PC-9 (cell line): ENCODE measurements at regions of chr12 and their contacts with region 1.

Region 1: GRCh38 chr12:108833355-108833733 is 24.0 kb downstream of the SSH1 start:
- DNase-seq: peak; percentile 88 to 92
- H3K4me3 ChIP-seq: peak overlapping the region; percentile 31; the same call in 1 of the 2 replicates
- H3K27ac ChIP-seq: peak overlapping the region; percentile 93
- H3K4me1 ChIP-seq: peaks cover 45% of the 10 kb centered on the region
- H3K27me3 ChIP-seq: no peaks in the 10 kb centered on the region
- CTCF ChIP-seq: no peak

Region 2: DNA sequence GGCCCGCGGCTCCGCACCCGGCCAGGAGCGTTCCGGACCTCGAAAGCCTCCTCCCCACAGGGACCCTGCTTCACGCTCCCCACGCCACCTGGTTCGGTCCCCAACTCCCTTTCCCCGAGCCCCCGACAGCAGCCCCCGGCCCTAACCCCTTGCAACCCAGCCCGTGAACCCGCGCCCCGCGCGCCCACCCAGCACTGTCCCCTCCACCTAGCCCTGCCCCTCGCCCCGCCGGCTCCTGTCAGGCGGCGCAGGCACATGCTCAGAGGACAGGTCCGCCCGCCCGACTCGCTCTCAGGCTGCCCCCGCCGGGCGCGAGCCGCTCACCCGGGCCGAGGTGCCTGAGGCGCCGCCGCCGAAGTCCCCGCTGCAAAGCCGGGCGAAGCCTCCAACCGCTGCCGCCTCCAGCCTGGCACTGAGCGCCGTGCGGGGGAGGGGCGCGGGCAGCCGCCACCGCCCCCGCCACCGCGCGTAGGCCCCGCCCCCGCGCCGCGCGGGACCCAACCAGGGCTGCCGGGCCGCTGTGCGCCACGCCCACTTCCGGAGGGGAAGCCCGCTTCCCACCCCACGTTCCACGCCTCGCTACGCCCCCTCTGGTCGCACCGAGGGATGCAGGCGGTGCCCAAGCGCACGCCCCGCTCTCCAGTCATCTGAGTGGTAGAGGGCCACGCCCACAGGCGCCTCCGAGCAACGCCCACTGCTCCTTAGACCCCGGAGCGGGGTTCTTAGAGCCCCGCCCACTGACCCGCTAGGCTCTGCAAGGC is 102.1 kb before region 1 on chr12 and contains the start of gene CORO1C:
- CTCF ChIA-PET with region 1: no interaction called
- POLR2A ChIA-PET with region 1: interaction called, 8 read pairs
- intact Hi-C with region 1: loop called (anchors 5 kb)
- DNase-seq: peak; percentile 85 to 98
- H3K4me3 ChIP-seq: peak within 1 kb of the TSS; percentile 85
- H3K27ac ChIP-seq: peak within 1 kb of the TSS; percentile 84
- H3K4me1 ChIP-seq: peaks cover 46% of the 10 kb centered on the region
- H3K27me3 ChIP-seq: no peaks in the 10 kb centered on the region
- CTCF ChIP-seq: peak; percentile 80
- total RNA-seq, gene CORO1C: 122 and 139 TPM in 2 replicates

Region 3: GRCh38 chr12:108803428-108804105 is 29.8 kb before region 1 on chr12:
- CTCF ChIA-PET with region 1: no interaction called
- POLR2A ChIA-PET with region 1: interaction called, 10 read pairs
- intact Hi-C with region 1: no loop called
- DNase-seq: peak; percentile 58 to 65
- H3K4me3 ChIP-seq: no peak overlapping the region
- H3K27ac ChIP-seq: no peak overlapping the region
- H3K4me1 ChIP-seq: no peaks in the 10 kb centered on the region
- H3K27me3 ChIP-seq: no peaks in the 10 kb centered on the region
- CTCF ChIP-seq: peak; percentile 94

Region 4: DNA sequence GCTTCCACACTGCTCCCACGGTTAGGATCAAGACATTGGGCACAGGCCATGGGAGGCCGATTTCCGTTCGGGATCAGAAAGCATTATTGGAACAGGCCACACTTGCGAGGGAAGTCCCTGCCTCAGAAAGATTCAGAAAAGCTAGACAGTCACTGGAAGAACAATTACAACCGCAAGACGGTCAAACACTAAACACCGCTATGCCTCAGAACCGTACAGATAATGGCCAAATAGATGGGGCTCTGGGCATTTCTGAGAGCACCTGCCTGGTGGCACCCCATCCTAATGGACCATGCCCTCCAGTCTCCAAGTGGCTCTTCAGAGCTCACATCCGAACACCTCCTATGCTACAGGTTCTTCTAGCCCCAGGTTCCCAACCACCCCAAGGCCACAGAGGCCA is 18.0 kb before region 1 on chr12:
- CTCF ChIA-PET with region 1: no interaction called
- POLR2A ChIA-PET with region 1: interaction called, 16 read pairs
- intact Hi-C with region 1: no loop called
- DNase-seq: no peak
- H3K4me3 ChIP-seq: no peak overlapping the region
- H3K27ac ChIP-seq: no peak overlapping the region
- H3K4me1 ChIP-seq: no peaks in the 10 kb centered on the region
- H3K27me3 ChIP-seq: no peaks in the 10 kb centered on the region
- CTCF ChIP-seq: no peak

Region 5: DNA sequence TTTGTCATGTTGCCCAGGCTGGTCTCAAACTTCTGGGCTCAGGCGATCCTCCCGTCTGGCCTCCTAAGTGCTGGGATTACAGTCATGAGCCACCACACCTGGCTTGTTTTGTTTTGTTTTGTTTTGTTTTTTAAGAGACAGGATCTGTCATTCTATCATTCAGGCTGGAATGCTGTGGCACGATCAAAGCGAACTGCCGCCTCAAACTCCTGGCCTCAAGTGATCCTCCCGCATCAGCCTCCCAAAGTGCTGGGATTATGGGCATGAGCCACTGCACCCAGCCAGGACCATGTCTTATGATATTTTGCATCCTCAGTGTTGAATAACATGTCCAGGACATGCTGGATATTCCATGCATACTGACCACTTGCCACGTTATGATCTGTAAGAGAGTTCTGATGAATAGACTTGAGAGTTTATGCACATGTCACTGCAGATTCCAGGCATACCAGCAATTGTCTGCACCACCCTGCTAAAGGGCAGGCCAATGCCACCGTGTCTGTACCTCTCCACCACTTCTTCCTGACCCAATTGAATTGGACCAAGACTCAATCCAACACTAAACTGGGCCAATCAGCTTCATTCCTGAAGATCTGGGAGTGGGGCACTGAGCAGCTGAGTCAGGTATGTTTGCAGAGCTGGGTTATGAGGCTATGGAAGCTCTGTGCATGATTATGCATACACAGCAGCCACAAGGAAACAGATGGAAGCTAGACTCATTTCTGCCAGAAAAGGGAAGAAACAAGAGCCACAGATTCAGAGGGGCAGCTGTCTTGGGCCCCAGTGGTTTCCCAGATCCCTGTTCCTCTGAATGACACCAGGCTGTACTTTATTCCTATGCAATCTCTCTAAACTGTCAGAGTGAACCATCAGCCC is 74.4 kb after region 1 on chr12:
- CTCF ChIA-PET with region 1: interaction called, 3 read pairs
- POLR2A ChIA-PET with region 1: no interaction called
- intact Hi-C with region 1: loop called (anchors 1 kb)
- DNase-seq: peak; percentile 61 to 79
- H3K4me3 ChIP-seq: no peak overlapping the region
- H3K27ac ChIP-seq: no peak overlapping the region
- H3K4me1 ChIP-seq: peaks cover 27% of the 10 kb centered on the region
- H3K27me3 ChIP-seq: no peaks in the 10 kb centered on the region
- CTCF ChIP-seq: no peak

Region 6: GRCh38 chr12:109154451-109155438 is 321.4 kb after region 1 on chr12:
- CTCF ChIA-PET with region 1: no interaction called
- POLR2A ChIA-PET with region 1: interaction called, 11 read pairs
- intact Hi-C with region 1: no loop called
- DNase-seq: peak; percentile 77 to 85
- H3K4me3 ChIP-seq: peak overlapping the region; percentile 61
- H3K27ac ChIP-seq: no peak overlapping the region
- H3K4me1 ChIP-seq: 0 out of 2 replicates have a peak, but pooled peaks cover 5% of the 10 kb centered on the region
- H3K27me3 ChIP-seq: peaks cover 7% of the 10 kb centered on the region; the same call in 1 of the 2 replicates
- CTCF ChIP-seq: no peak